ENCODE measurements at regions of chr9 and their contacts with region 1.

Region 1: GRCh38 chr9:80467632-80468031 is 895.9 kb downstream of the TLE4 start:
- DNase-seq: peak; percentile 23
- ATAC-seq: peak; percentile 47 to 93

Region 2: DNA sequence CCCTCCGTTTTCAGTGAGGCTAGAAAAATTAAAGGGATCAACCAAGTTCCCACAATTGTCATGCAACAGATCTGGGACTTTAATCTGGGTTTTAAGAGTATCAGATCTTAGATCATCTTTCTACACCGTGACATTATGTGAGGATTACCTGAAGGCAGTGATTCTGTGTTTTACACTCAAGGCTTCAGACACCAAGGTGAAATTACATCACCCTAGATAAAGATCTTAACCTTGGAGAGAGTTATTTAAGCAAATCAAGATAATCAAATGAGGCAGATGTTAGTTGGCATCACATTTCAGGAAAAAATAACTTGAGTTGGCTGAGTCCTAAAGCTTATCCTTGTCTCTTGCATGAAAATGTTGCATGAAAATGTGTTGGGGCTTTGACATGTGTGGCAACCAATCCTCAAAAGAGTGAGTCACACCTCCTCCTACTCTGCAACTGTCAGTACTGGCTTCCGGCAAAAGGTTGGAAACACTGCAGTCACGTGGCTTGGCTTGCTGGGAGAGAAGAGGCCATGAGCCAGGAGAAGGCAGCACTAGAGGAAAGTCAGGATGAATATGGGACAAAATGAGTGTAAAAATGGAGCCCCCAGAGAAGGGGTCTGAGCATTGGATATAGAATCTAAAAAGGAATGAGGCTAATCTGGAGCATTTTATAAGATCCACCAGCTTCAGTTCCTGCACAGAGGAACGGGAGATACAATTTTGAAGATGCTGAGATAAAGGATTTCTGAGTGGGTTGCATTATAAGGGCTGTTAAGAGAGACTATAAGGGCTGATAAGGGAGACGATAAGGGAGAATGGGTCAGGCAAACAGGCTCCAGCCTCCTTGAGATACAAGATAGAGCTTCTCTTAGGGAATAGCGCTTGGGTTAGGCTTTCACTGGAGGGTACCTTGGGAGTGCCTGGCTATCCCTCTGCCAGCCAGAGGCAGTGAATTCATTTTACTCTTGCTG is 1564.0 kb after region 1 on chr9:
- intact Hi-C with region 1: loop called in 1 of 2 experiments (anchors 10 kb)
- DNase-seq: peak; percentile 68
- ATAC-seq: peak; percentile 87 to 96